Posterior cingulate gyrus (tissue), 11 donors: ENCODE measurements at regions of chr3 and their contacts with region 1.

Region 1: DNA sequence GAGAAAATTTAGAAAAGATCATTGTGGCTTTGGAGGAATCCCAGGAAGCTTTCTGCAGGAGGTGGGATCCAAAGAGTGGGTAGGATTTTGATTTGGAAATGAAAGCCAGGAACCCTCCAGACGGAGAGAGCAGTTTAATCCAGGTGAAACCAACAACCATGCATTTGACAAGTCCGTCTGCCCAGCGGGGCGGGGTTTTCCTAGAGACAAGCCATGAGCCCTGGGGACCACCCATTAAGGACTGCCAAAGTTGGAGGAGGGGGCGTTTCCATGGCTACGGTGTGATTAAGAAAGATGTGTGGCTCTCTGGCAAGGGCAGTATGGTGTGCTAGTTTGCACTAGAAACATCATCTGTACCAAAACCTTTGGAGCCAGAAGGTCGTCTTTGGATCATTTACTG is 53.4 kb downstream of the SRGAP3 start:
- DNase-seq: no peak

Region 2: DNA sequence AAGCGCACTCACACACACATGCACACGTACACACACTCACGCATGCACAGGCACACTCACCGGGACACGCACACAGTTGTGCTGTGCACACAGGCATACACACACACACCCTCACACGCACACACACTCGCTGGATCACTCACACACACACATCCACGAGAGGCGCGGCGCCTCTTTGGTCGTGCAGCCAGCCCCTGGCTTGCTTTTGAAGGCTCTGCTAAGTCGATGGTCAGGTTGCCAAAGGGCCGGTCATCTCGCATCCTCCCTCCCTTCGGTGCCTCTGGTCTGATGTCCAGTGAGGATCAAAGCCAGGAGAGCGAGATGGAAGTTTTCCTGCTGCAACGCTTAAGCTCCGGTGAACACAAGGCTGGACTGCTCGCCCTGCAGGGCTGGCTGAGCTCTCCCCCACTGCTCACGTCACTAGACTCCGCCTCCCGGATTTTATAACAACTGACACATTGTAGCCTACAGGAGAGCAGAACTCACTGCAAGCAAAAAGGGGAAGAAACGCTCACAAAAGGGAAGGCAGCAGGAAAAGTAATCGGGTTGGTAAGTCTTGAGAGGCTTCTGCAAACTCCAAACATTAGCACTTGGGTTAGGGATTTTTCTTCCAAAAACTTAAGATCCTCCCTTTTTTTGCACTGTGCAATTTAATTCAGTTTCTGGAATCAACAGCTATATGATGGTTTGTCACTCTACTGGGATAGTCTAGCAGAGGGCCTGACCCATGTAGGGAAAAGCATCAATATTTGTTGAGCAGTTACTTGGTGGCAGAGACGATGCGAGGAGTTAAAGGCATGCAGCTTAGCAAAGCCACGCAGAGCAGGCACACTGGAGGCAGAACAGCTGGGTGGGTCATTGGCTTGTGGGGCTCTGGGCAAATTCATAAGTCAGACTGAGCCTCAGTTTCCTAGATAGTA is 53.5 kb after region 1 on chr3 and contains the start of gene SRGAP3:
- intact Hi-C with region 1: loop called (anchors 5 kb)
- DNase-seq: peak; percentile 82 to 98 (median 90)